Esophagus squamous epithelium (tissue), 5 donors: ENCODE measurements at regions of chr6 and their contacts with region 1.

Region 1: GRCh38 chr6:27753668-27754407 is 158.4 kb downstream of the OR2B2 start:
- DNase-seq: no peak
- H3K4me3 ChIP-seq: peak overlapping the region; percentile 54 to 83 (median 76)
- H3K27ac ChIP-seq: peak overlapping the region in 3 of 4 donors; percentile 3 to 22 (median 11)
- H3K4me1 ChIP-seq: peaks cover 0 to 42% (median 6%) of the 10 kb centered on the region in 3 donors
- H3K27me3 ChIP-seq: peaks cover 0 to 33% (median 0%) of the 10 kb centered on the region in 4 donors
- CTCF ChIP-seq: no peak
- POLR2A ChIP-seq: no peak

Region 2: DNA sequence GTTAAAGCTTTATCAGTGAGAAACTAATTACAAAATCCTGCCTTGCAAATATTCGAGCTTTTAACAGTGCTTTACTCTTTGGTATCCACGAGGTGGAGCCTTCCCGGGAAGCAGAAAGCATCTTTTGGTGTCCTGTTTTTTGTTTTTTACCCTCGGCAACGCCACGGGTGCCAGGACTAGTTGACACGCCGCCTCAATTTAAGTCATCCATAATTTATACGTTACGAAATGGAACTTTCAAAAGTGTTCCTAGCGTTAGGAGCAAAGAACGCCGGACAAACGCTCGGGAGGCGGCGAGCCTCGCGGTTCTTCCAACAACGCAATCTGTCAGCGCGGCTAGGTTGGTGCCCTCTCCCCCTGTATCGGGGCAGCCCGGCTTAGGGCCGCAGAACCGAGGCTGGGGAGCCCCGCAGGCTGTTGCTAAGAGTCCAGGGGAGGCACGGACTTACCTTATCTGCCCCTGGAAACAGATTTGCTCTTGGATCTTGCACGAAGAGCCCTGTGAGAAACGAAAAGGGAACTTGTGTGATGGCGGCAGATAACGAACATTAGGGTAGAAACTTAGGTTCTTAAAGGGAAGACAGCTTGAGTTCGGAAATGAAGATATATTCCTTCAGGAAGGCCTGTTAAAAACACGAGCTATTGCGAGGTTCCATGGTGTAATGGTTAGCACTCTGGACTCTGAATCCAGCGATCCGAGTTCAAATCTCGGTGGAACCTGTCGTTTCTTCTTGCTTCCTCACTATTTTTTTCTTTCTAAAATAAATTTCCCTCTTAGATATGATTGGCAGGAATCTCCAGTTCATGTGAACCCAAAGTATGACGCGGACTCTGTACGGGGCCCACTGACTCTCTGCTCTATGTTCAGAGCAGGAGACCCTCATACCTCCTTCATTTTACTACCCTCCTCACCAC is 234.7 kb before region 1 on chr6:
- intact Hi-C with region 1: loop called (anchors 10 kb)
- DNase-seq: no peak
- H3K4me3 ChIP-seq: peak overlapping the region; percentile 48 to 85 (median 78)
- H3K27ac ChIP-seq: peak overlapping the region; percentile 75 to 94 (median 92)
- H3K4me1 ChIP-seq: peaks cover 0 to 28% (median 8%) of the 10 kb centered on the region in 3 donors
- H3K27me3 ChIP-seq: peaks cover 0 to 40% (median 0%) of the 10 kb centered on the region in 4 donors
- CTCF ChIP-seq: peak; percentile 50 to 79 (median 67)
- POLR2A ChIP-seq: no peak